ENCODE measurements at regions of chr17 and their contacts with region 1.

Region 1: DNA sequence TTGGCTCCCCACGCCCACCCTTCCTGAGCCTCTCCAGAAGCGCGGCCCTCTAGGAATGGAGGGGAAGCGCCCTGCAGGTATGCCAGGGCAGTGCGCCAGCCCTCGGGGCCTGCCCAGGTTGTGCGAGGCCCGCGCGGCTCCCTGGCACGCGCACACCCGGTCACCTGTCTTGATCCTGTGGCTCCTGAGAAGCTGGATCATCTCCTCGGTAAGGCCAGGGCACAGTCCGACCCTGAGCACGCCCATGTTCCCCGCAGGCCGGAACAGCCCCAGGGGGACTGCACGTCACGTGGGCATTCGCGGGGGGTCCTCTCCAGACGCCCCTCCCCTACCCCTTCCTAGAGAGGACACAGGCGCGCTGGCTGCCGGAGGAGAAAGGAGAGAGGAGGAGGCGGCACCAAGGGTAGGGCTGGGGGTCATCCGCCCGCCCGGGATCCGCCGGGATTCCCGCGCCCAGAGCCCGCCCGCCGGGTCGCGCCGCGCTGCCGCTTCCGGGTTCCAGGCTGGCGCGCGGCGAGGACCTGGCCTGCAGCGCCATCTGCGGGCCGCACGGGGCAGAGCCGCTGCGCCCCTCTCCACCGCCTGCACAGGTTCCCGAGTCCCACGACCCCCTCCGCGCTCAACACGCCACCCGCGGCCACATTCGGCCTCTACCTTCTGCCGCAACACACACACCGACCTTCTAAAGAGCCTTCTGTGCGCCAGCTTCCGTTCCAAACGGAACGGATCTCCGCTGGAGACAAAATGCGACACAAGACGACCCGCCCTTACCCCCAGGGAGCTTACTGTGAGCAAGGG is at the start of gene RAD51D:
- DNase-seq: no peak
- H3K4me3 ChIP-seq: peak within 1 kb of the TSS; percentile 71
- H3K27me3 ChIP-seq: no peaks in the 10 kb centered on the region
- CTCF ChIP-seq: peak; percentile 70
- polyA plus RNA-seq, gene RAD51D: 13.1 and 16.1 TPM in 2 replicates

Region 2: GRCh38 chr17:34420254-34420766 is 699.3 kb before region 1 on chr17:
- CTCF ChIA-PET with region 1: interaction called, 27 read pairs
- POLR2A ChIA-PET with region 1: no interaction called
- DNase-seq: no peak
- H3K4me3 ChIP-seq: no peak overlapping the region
- H3K27me3 ChIP-seq: peaks cover 14% of the 10 kb centered on the region
- CTCF ChIP-seq: peak; percentile 91

Region 3: DNA sequence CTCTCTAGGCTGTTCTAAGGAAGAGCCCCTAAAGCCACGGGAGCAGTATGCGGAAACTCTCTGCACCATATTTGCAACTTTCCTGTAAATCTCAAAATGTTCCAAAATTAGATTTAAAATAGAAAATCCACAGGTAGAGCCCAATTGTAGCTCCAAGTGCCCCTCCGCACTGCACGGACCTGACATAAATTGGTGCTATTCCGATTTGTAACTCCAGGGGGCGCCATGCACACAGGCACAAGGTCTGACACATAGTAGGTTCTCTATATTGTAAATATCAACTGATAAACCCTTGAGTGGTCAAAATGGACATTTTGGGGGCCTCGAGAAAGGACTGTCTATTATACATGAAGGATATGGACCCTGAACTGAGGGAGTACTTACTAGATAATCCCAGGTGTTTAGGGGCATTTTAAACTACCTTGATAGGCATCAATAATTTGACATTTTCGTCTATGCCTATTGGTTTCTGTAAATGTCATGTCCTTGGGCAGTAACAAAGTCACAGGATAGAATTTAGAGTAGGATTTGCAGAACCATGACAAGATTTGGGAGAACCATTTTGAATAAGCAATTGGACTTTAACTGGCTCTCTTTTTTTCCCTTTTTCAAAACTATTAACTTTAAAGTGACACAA is 576.7 kb before region 1 on chr17:
- CTCF ChIA-PET with region 1: interaction called, 31 read pairs
- POLR2A ChIA-PET with region 1: no interaction called
- DNase-seq: no peak
- H3K4me3 ChIP-seq: no peak overlapping the region
- H3K27me3 ChIP-seq: no peaks in the 10 kb centered on the region
- CTCF ChIP-seq: peak; percentile 82

Region 4: GRCh38 chr17:34584805-34585416 is 534.7 kb before region 1 on chr17:
- CTCF ChIA-PET with region 1: no interaction called
- POLR2A ChIA-PET with region 1: no interaction called
- DNase-seq: no peak
- H3K4me3 ChIP-seq: no peak overlapping the region
- H3K27me3 ChIP-seq: peaks cover 42% of the 10 kb centered on the region
- CTCF ChIP-seq: no peak

Region 5: DNA sequence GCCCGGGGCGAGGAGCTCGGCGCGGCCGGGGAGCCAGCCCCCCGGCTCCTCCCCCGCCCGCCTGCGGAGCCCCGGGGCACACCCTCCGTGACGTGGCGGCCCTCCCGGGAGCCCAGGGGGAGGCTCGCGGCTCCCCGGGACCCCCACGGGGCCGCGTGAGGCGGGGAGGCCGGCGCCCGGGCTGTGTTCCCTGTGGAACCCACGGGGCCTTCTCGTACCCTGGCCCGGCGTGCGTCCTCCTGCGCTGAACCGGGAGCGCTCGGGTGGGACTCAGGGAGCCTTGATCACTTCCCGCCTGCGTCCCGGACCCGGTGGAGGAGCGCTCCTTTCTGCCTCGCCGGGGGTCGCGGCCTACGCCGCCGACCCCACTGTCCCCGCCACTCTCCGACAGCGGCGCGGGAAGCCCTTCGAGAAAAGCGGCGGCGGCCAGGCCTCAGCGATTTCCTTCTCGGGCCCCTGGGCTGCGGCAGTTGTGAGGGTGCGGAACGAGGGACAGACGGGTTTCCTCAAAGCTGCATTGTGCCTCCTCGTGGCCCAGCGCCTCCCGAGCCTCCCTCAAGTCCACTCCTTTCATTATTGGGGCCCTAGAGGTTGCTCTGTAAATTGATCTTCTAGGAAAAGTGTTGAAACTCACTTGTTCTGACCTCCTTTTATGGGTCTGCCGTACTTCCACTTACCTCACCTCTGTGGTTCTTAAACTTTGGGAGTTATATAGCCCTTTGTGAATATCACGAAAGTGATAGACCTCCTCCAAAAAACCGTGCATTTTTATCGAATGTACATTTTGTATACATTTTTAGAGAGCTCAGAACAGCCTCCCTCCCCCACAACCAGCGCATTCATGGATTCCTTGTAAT is 138.7 kb before region 1 on chr17:
- CTCF ChIA-PET with region 1: interaction called, 11 read pairs
- POLR2A ChIA-PET with region 1: no interaction called
- DNase-seq: no peak
- H3K4me3 ChIP-seq: peak overlapping the region; percentile 79
- H3K27me3 ChIP-seq: no peaks in the 10 kb centered on the region
- CTCF ChIP-seq: peak; percentile 53

Region 6: GRCh38 chr17:34998205-34998604 is 121.4 kb before region 1 on chr17:
- CTCF ChIA-PET with region 1: interaction called, 90 read pairs
- POLR2A ChIA-PET with region 1: interaction called, 5 read pairs
- DNase-seq: no peak
- H3K4me3 ChIP-seq: no peak overlapping the region
- H3K27me3 ChIP-seq: no peaks in the 10 kb centered on the region
- CTCF ChIP-seq: peak; percentile 90

Region 7: DNA sequence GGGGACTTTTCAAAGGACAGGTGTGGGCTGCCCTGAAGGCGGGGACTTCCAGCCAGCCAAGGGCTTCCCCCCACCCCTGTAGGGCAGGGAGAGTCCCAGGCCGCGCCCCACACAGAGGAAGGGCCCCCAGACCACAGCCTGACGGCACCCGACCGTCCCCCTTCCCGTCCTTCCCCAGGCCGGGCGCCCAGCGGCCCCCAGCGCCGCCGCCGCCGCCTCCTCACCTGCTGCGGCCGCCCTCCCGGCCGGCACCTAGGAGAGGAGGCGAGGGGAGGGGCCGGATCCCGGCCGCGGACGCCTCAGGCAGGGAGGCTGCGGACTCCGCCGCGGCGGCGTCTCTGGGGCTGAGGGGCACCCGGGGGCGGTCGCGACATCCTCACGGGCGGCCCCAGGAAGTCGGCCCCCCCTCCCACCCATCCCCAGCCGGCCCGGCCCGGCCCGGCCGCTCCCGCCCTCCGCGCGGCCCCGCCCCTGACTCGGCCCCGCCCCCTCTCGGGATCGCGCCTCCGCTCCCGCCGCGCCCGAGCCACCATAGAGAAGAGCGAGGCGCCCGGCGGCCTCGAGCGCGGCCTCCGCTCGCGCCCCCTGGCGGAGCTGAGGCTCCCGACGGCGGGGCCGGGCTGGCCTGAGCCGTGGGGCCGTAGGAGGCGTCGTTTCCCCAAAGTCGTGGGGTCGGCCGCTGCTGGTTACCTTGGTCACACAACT is 30.5 kb before region 1 on chr17:
- CTCF ChIA-PET with region 1: interaction called, 16 read pairs
- POLR2A ChIA-PET with region 1: no interaction called
- DNase-seq: no peak
- H3K4me3 ChIP-seq: peak overlapping the region; percentile 85
- H3K27me3 ChIP-seq: no peaks in the 10 kb centered on the region
- CTCF ChIP-seq: peak; percentile 59

Region 8: DNA sequence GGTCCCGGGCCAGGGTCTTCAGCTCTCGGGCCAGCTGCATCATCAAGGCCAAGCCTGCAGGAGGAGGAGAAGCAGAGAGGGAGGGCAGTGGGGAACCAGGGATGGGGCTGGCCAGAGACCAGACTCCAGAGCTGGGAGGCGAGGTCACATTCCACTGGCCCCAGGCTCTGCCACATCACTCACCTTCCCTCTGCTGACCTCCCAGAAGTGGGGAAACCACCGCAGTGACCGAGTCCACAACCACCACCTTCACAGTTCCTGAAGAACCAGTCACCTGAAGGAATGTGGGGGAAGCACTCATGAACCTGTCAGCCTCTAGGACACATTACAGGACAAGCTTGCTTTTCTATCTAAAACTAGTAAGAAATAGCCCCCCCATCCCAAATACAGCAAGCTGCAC is 16.3 kb before region 1 on chr17:
- CTCF ChIA-PET with region 1: interaction called, 13 read pairs
- POLR2A ChIA-PET with region 1: no interaction called
- DNase-seq: no peak
- H3K4me3 ChIP-seq: no peak overlapping the region
- H3K27me3 ChIP-seq: no peaks in the 10 kb centered on the region
- CTCF ChIP-seq: no peak

Measured in BJ (cell line).